B cell (primary cell): ENCODE measurements at regions of chr5 and their contacts with region 1.

Region 1: GRCh38 chr5:35926389-35927051 is 11.9 kb downstream of the CAPSL start:
- DNase-seq: peak; percentile 57
- ATAC-seq: peak; percentile 47
- H3K4me3 ChIP-seq: no peak overlapping the region
- H3K4me3 Mint-ChIP-seq: no peak overlapping the region
- H3K27ac ChIP-seq: no peak overlapping the region
- H3K27ac Mint-ChIP-seq: no peak overlapping the region
- H3K4me1 ChIP-seq: peaks cover 6% of the 10 kb centered on the region in 2 donors
- H3K4me1 Mint-ChIP-seq: peaks cover 10% of the 10 kb centered on the region
- H3K27me3 ChIP-seq: peaks cover 0 to 10% (median 4%) of the 10 kb centered on the region in 4 experiments
- H3K27me3 Mint-ChIP-seq: peaks cover 30% of the 10 kb centered on the region
- CTCF ChIP-seq: peak; percentile 85

Region 2: DNA sequence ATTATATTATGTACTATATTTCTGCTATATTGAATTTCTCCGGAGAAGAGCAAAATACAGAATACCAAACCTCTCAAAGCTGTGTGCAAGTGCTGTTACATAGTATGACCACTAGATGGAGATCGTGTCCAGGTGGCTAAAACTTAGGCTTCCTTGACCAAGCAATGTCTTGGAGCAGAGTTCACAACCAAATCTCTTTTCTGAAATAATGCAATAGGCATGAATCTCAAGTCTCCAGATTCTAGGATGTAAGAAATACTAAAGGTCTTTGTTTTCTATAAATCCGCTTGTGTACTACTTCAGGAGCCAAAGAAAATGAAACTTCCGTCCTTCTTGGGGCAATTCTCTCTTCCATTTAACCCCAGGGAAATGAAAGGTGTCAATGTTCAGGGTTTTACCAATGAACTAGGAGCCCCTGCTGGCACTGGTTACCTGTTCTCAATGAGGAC is 1451.9 kb before region 1 on chr5:
- CTCF ChIA-PET with region 1: no interaction called
- POLR2A ChIA-PET with region 1: no interaction called
- intact Hi-C with region 1: loop called (anchors 2 kb)
- DNase-seq: peak; percentile 50
- ATAC-seq: peak; percentile 69
- H3K4me3 ChIP-seq: no peak overlapping the region
- H3K4me3 Mint-ChIP-seq: no peak overlapping the region
- H3K27ac ChIP-seq: no peak overlapping the region
- H3K27ac Mint-ChIP-seq: no peak overlapping the region
- H3K4me1 ChIP-seq: no peaks in the 10 kb centered on the region
- H3K4me1 Mint-ChIP-seq: peaks cover 4% of the 10 kb centered on the region
- H3K27me3 ChIP-seq: peaks cover 0 to 5% (median 0%) of the 10 kb centered on the region in 4 experiments
- H3K27me3 Mint-ChIP-seq: peaks cover 21% of the 10 kb centered on the region
- CTCF ChIP-seq: peak; percentile 98

Region 3: GRCh38 chr5:35089334-35090314 is 836.9 kb before region 1 on chr5:
- CTCF ChIA-PET with region 1: interaction called, 94 read pairs
- POLR2A ChIA-PET with region 1: no interaction called
- intact Hi-C with region 1: loop called (anchors 1 kb)
- DNase-seq: peak; percentile 63
- ATAC-seq: no peak
- H3K4me3 ChIP-seq: no peak overlapping the region
- H3K4me3 Mint-ChIP-seq: no peak overlapping the region
- H3K27ac ChIP-seq: no peak overlapping the region
- H3K27ac Mint-ChIP-seq: no peak overlapping the region
- H3K4me1 ChIP-seq: no peaks in the 10 kb centered on the region
- H3K4me1 Mint-ChIP-seq: no peaks in the 10 kb centered on the region
- H3K27me3 ChIP-seq: peaks cover 0 to 2% (median 0%) of the 10 kb centered on the region in 4 experiments
- H3K27me3 Mint-ChIP-seq: no peaks in the 10 kb centered on the region
- CTCF ChIP-seq: peak; percentile 84

Region 4: DNA sequence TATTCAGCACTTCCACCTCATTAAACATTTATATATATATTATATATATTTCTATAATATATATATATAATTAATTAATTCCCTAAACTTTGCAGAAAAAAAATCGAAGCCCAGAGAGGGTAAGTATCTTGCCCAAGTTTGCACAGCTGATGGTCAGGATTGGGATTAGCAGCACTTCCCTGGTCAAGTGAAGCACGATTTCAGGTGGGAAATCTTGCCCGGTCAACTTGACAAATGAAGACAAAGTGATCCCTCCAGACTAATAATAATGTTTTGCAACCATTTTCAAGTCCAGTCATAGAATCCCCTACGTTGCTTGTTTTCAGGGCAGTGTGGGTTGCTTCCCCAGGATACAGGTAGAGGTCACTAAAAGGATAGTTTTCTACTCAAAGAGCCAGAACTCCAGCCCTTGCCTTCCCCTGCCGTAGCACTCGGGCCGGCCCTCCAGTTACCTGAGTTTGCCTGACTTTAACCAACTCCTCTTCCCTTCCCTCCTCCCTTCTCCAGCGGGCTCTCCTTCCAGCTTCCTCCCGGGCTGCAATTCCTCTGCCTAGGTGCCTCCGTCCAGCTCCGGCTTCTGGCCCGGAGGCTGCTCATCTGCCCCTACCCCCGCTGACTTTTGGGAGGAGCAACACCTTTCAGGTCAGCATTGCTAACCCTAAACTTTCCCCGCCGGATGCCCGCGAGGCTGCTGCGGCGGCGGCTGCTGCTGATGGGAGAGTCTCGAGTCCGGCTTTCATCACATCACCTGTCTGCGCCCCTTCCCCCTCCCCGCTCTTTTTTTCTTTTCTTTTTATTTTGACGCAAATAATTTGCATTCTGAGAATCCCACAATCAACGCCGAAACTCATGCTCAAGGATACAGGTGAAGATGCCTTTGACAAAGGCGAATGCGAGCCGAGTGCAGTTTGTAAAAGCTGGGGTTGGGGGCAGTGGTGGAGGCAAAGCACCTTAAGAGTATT is 697.2 kb before region 1 on chr5:
- CTCF ChIA-PET with region 1: no interaction called
- POLR2A ChIA-PET with region 1: no interaction called
- intact Hi-C with region 1: loop called (anchors 10 kb)
- DNase-seq: peak; percentile 29
- ATAC-seq: peak; percentile 39
- H3K4me3 ChIP-seq: peak overlapping the region in 4 of 5 experiments; percentile 13 to 49 (median 32)
- H3K4me3 Mint-ChIP-seq: peak overlapping the region; percentile 81
- H3K27ac ChIP-seq: no peak overlapping the region
- H3K27ac Mint-ChIP-seq: peak overlapping the region; percentile 10
- H3K4me1 ChIP-seq: peaks cover 9 to 13% of the 10 kb centered on the region in 2 donors
- H3K4me1 Mint-ChIP-seq: peaks cover 13% of the 10 kb centered on the region
- H3K27me3 ChIP-seq: peaks cover 0 to 34% (median 29%) of the 10 kb centered on the region in 4 experiments
- H3K27me3 Mint-ChIP-seq: peaks cover 62% of the 10 kb centered on the region
- CTCF ChIP-seq: no peak

Region 5: GRCh38 chr5:35651002-35651756 is 275.3 kb before region 1 on chr5:
- CTCF ChIA-PET with region 1: interaction called, 12 read pairs
- POLR2A ChIA-PET with region 1: no interaction called
- intact Hi-C with region 1: no loop called
- DNase-seq: no peak
- ATAC-seq: no peak
- H3K4me3 ChIP-seq: no peak overlapping the region
- H3K4me3 Mint-ChIP-seq: no peak overlapping the region
- H3K27ac ChIP-seq: no peak overlapping the region
- H3K27ac Mint-ChIP-seq: no peak overlapping the region
- H3K4me1 ChIP-seq: no peaks in the 10 kb centered on the region
- H3K4me1 Mint-ChIP-seq: no peaks in the 10 kb centered on the region
- H3K27me3 ChIP-seq: no peaks in the 10 kb centered on the region
- H3K27me3 Mint-ChIP-seq: no peaks in the 10 kb centered on the region
- CTCF ChIP-seq: peak; percentile 17

Region 6: DNA sequence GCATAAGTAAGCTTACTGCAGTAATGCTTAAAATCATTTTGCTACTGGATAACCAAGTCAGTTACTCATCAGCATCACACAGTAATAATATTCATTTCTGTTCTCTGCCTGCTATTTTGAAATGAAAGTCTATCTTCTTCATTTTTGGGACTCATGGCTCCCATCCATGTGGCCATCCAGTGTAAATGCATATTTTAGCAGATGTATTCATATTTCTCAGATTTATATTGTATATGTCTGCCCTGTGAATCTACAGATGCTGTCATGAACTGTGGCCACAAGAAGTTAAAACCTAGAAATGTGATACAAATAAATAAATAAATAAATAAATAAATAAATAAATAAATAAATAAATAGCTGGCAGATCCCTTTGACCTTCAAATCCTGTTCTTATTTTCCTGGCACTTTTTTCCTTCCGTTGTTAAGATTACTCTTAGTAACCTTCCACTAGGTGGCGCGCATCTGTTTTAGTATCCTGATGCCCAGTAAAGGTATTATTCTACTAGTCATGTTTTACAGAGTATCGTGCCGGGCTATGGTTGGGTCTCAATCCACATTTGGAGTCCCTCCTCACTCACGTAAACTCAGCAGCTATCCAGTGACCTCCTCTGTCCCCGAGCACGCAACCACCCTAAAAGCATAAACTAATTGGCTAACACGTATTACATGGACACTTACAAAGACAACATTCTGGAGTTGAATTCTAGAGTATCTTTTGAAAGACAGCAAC is 149.0 kb before region 1 on chr5:
- CTCF ChIA-PET with region 1: interaction called, 54 read pairs
- POLR2A ChIA-PET with region 1: no interaction called
- intact Hi-C with region 1: loop called (anchors 1 kb)
- DNase-seq: peak; percentile 45
- ATAC-seq: no peak
- H3K4me3 ChIP-seq: no peak overlapping the region
- H3K4me3 Mint-ChIP-seq: no peak overlapping the region
- H3K27ac ChIP-seq: no peak overlapping the region
- H3K27ac Mint-ChIP-seq: no peak overlapping the region
- H3K4me1 ChIP-seq: no peaks in the 10 kb centered on the region
- H3K4me1 Mint-ChIP-seq: no peaks in the 10 kb centered on the region
- H3K27me3 ChIP-seq: no peaks in the 10 kb centered on the region
- H3K27me3 Mint-ChIP-seq: no peaks in the 10 kb centered on the region
- CTCF ChIP-seq: peak; percentile 65